Gastrocnemius medialis (tissue), 4 donors: ENCODE measurements at regions of chr3 and their contacts with region 1.

Region 1: GRCh38 chr3:186849374-186849975 is 7.0 kb downstream of the ADIPOQ start:
- DNase-seq: no peak
- ATAC-seq: peak; percentile 90 to 97
- H3K4me3 ChIP-seq: no peak overlapping the region
- H3K27ac ChIP-seq: no peak overlapping the region
- H3K4me1 ChIP-seq: no peaks in the 10 kb centered on the region
- H3K27me3 ChIP-seq: peaks cover 0 to 18% (median 11%) of the 10 kb centered on the region in 3 donors
- CTCF ChIP-seq: peak; percentile 33 to 62 (median 50)
- POLR2A ChIP-seq: no peak

Region 2: GRCh38 chr3:187000711-187001151 is 151.3 kb after region 1 on chr3:
- in situ Hi-C with region 1: no loop called
- intact Hi-C with region 1: no loop called
- DNase-seq: no peak
- ATAC-seq: no peak
- H3K4me3 ChIP-seq: no peak overlapping the region
- H3K27ac ChIP-seq: no peak overlapping the region
- H3K4me1 ChIP-seq: no peaks in the 10 kb centered on the region
- H3K27me3 ChIP-seq: no peaks in the 10 kb centered on the region
- CTCF ChIP-seq: no peak
- POLR2A ChIP-seq: no peak

Region 3: GRCh38 chr3:187066228-187066995 is 216.9 kb after region 1 on chr3:
- in situ Hi-C with region 1: no loop called
- intact Hi-C with region 1: loop called (anchors 10 kb)
- DNase-seq: peak; percentile 17 to 49
- ATAC-seq: peak; percentile 55 to 58
- H3K4me3 ChIP-seq: no peak overlapping the region
- H3K27ac ChIP-seq: peak overlapping the region in 3 of 4 donors; percentile 37 to 75 (median 61)
- H3K4me1 ChIP-seq: peaks cover 32 to 48% of the 10 kb centered on the region in 2 donors
- H3K27me3 ChIP-seq: no peaks in the 10 kb centered on the region
- CTCF ChIP-seq: peak in 3 of 5 experiments; percentile 26 to 44 (median 31)
- POLR2A ChIP-seq: no peak

Region 4: GRCh38 chr3:187150599-187150998 is 301.1 kb after region 1 on chr3:
- in situ Hi-C with region 1: loop called in 1 of 4 experiments (anchors 5 kb)
- intact Hi-C with region 1: no loop called
- DNase-seq: no peak
- ATAC-seq: no peak
- H3K4me3 ChIP-seq: no peak overlapping the region
- H3K27ac ChIP-seq: no peak overlapping the region
- H3K4me1 ChIP-seq: no peaks in the 10 kb centered on the region
- H3K27me3 ChIP-seq: no peaks in the 10 kb centered on the region
- CTCF ChIP-seq: no peak
- POLR2A ChIP-seq: no peak

Region 5: DNA sequence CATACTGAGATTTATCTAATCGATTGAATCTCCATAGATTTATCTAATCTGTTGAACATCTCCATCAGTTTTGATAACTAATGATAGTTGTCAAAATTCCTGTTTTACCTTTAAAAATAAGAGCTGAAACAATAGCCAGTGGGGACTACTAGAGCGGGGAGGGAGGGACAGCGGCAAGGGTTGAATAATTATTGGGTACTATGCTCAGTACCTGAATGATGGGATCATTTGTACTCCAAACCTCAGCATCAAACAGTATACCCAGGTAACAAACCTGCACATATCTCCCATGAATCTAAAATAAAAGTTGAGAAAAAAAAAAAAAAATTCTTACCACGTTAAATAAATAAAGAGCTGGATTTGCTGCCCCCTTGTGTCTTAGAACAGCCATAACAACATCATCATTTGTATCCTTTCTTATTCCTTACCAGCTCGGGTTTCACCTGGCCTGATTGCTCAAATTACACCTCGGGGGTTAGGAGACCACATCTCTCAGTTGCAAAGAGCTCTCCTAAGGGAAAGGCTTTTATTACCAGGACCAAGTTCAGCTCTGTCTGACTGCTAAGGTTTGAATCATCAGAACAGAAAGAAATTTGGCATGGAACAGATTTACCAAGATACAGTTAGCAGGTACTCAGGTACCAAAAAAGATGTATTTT is 315.5 kb after region 1 on chr3:
- in situ Hi-C with region 1: loop called in 3 of 4 experiments (anchors 5 to 10 kb)
- intact Hi-C with region 1: loop called (anchors 1 kb)
- DNase-seq: peak in 1 of 2 donors; percentile 15
- ATAC-seq: peak; percentile 68 to 90
- H3K4me3 ChIP-seq: no peak overlapping the region
- H3K27ac ChIP-seq: no peak overlapping the region
- H3K4me1 ChIP-seq: peaks cover 11 to 24% of the 10 kb centered on the region in 2 donors
- H3K27me3 ChIP-seq: no peaks in the 10 kb centered on the region
- CTCF ChIP-seq: peak; percentile 55 to 83 (median 69)
- POLR2A ChIP-seq: no peak